ENCODE measurements at regions of chr7 and their contacts with region 1.

Region 1: GRCh38 chr7:143240291-143241168 is 18.7 kb downstream of the TAS2R40 start:
- DNase-seq: peak; percentile 54
- CTCF ChIP-seq: peak; percentile 77

Region 2: GRCh38 chr7:143193880-143194279 is 46.6 kb before region 1 on chr7:
- CTCF ChIA-PET with region 1: no interaction called
- POLR2A ChIA-PET with region 1: no interaction called
- DNase-seq: no peak
- CTCF ChIP-seq: no peak

Region 3: DNA sequence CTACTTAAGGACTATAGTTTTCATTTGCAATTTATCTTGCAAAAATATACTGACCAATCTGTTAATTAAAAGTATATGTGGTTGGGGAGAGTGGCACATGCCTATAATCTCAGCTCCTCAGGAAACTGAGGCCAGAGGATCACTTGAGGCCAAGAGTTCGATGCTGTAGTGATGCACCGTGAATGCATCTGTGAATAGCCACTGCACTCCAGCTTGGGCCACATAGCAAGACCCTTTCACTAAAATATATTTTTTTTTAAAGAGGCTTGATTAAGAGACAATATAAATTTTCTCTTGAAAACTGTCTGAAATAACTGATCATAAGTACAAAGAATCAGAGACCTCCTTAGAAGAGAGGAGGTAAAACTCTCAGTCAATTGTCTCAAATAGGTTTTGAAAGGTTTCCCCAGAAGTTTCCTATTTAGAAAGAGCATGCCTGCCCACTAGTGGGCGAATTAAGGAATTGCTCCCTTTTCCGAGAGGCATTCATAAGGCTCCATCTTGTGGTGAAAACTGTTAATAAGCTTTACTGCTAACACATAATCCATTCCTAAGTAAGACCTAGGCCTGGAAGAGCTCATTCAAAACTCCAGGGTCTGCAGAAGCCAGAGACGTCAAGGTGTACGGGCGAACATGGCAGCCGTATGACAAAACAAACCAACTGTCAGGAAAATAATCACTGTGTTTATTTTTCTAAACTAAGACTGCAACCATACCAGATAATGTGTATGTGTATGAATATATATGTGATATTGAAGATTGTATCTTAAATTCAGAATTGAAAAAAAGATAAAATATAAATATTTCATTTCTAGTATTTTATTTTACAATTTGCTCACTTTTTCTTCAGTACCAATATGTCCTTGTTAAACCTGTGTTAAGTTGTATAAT is 25.5 kb before region 1 on chr7:
- CTCF ChIA-PET with region 1: interaction called, 17 read pairs
- POLR2A ChIA-PET with region 1: no interaction called
- DNase-seq: peak; percentile 74
- CTCF ChIP-seq: peak; percentile 100

Region 4: DNA sequence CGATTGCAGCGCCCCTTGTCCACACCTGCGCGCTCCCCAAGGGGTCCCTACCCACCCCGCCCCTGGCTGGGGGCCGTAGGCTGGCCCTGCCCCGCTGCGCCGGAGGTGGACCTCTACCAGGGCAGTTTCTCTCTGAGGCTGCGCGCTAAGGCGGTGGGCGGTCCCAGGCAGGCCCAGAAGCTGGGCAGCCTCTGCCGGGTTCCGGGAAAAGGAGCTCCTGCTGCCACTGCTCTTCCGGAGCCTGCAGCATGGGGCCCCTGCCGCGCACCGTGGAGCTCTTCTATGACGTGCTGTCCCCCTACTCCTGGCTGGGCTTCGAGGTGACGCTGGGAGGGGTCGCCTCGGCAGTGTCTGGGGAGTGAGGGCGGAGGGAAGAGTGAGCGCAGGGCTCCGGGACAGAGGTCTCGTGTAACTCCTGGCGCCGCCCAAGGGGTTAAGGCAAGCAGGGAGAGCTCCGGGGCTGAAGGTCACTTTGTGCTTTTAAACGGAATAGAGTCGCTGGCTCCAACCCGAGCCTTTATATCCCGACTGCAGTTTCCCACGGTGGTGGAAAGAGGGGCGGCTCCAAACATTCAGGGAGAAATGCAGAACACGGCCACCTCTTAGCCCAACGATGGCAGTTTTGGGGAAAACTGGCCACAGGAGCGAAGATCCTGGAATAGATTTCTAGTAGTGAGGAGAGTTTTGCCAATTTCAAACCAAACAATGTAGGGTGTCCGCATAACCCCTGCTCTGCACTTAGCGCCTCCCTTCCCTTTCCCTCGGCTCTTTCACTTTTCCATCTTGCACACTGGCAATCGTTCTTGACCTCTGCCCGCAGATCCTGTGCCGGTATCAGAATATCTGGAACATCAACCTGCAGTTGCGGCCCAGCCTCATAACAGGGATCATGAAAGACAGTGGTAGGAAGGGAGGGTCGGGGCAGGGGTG is 23.0 kb after region 1 on chr7 and contains the start of gene GSTK1:
- CTCF ChIA-PET with region 1: interaction called, 103 read pairs
- POLR2A ChIA-PET with region 1: no interaction called
- DNase-seq: peak; percentile 91
- CTCF ChIP-seq: no peak

Region 5: GRCh38 chr7:143287935-143288826 is 47.7 kb after region 1 on chr7 and contains the start of gene CASP2:
- CTCF ChIA-PET with region 1: interaction called, 21 read pairs
- POLR2A ChIA-PET with region 1: no interaction called
- DNase-seq: peak; percentile 100
- CTCF ChIP-seq: peak; percentile 28

Region 6: DNA sequence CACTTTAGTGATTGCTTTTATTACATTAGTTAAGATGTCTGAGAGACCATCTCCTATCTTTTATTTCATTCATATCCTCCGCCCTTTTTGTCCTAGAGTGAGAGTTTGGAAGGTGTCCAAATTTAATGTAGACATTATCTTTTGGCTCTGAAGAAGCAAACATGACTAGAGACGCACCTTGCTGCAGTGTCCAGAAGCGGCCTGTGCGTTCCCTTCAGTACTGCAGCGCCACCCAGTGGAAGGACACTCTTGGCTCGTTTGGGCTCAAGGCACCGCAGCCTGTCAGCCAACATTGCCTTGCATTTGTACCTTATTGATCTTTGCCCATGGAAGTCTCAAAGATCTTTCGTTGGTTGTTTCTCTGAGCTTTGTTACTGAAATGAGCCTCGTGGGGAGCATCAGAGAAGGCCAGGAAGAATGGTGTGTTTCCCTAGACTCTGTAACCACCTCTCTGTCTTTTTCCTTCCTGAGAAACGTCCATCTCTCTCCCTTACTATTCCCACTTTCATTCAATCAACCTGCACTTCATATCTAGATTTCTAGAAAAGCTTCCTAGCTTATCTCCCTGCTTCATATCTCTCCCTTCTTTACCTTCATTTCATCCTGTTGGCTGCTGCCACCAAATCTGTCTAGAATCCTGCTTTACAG is 65.0 kb after region 1 on chr7:
- CTCF ChIA-PET with region 1: interaction called, 33 read pairs
- POLR2A ChIA-PET with region 1: no interaction called
- DNase-seq: no peak
- CTCF ChIP-seq: peak; percentile 42

Region 7: DNA sequence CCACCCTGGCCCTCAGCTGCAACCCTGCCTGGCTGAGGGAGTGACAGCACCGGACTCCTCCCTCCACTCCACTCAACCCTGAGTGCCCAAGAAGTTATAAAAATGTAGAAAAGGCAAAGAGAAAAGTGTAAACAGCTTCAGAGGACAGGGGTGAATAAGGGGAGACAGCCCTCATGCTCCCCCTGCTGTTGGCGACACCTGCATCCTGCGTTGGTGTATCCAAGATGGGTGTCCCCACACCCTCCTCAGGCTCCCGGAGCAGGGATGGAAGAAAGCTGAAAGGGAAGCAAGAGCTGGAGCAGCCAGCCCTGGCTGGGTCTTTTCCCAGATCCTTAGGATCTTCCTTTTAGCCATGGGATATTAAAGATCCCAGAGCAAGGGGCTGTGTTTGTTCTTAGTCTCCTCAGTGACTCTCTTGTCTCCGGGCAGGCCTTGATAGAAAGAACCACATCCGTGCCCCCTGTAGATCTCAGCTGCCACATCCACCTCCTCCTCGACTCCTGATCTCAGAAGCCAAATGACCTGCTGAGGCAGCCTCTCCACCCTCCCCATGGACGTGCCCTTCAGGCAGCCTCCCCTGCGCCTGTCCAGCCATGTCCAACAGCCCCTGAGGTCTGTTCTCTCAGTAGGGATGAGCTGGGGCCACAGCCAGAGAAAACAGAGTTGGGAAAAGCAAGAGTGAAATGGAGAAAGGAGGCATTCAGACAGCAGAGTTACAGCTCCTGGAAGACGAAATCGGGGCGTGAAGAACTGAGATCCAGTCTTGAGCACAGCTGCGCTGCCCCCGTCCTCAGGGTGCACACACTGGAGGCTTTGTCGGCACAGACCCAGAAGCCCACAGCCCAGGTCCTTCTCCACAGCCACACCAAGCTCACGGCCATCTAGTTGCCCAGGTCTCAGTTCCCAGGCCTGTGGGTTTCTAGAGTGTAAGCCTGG is 115.2 kb after region 1 on chr7:
- CTCF ChIA-PET with region 1: interaction called, 11 read pairs
- POLR2A ChIA-PET with region 1: no interaction called
- DNase-seq: no peak
- CTCF ChIP-seq: no peak

Region 8: DNA sequence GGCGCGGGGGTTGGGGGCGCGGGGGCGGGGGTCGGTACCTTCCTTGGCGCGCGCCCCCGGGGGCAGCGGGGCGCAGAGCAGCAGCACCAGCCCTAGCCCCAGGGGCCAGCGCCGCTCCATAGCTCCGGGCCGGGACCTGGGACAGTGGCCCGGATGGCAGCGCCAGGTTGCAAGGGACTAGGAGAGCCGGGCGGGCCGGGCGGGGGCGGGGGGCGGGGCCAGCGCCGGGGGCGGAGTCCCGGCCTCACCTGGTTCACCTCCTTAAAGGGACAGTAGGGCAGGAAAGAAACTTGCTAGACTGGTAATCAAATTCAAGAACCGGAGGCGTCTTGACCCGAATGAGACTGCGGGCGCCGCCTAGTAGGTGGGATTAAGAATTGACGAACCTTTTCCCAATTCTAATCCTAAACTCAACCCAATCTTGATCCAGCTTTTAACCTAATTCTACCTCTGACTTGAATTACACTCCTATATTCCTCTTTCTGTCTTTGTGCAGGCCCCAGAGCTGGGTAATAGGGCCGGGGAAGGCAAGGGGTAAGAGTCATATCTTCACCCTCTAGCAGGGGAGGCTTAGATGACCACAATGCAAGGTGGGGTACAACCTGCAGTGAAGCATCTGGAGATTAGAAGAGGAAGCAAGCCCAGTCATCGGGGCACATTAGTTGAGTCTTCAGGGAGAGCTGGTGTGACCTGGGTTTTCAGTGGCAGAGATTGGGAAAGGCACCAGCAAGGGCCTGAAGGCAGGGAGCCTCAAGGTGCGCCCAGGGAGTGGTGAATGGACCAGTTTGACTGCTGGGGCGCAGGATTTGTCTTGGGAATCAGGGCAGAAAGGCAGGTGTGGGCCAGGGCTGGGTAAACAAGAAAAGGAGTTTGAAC is 168.4 kb after region 1 on chr7 and contains the start of gene EPHA1:
- CTCF ChIA-PET with region 1: interaction called, 57 read pairs
- POLR2A ChIA-PET with region 1: interaction called, 4 read pairs
- DNase-seq: no peak
- CTCF ChIP-seq: no peak